ENCODE measurements at regions of chr3 and their contacts with region 1.

Region 1: GRCh38 chr3:122942937-122943827 is 84.4 kb downstream of the SEMA5B start:
- DNase-seq: peak; percentile 74 to 89 (median 89)
- ATAC-seq: peak; percentile 85 to 87
- H3K4me3 ChIP-seq: no peak overlapping the region
- H3K27ac ChIP-seq: no peak overlapping the region
- H3K4me1 ChIP-seq: no peaks in the 10 kb centered on the region
- H3K27me3 ChIP-seq: no peaks in the 10 kb centered on the region

Region 2: DNA sequence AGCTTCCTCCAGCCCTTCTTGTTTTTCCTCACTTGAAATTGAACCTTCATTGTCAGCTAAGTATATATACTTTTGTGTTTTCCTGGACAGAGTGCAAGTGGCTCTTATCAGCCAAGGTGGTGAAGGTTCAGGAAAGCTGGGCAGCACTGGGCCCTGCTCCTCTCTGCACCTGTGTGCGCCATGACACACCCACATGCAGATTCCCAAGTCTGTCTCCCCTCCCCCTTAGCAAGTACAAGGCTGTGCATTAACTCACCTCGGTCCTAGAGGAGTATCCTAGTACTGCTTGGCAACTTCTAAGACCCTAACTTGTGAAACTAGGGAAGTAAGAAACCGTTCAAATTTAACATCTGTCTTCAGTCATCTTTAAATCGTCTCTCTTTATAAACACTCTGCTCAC is 62.6 kb before region 1 on chr3:
- intact Hi-C with region 1: no loop called
- DNase-seq: no peak
- ATAC-seq: peak in 1 of 2 donors; percentile 13
- H3K4me3 ChIP-seq: no peak overlapping the region
- H3K27ac ChIP-seq: no peak overlapping the region
- H3K4me1 ChIP-seq: no peaks in the 10 kb centered on the region
- H3K27me3 ChIP-seq: no peaks in the 10 kb centered on the region

Region 3: GRCh38 chr3:122982216-122983185 is 39.3 kb after region 1 on chr3:
- intact Hi-C with region 1: loop called in 2 of 4 experiments (anchors 5 kb)
- DNase-seq: peak; percentile 39 to 85 (median 76)
- ATAC-seq: peak; percentile 20 to 22
- H3K4me3 ChIP-seq: no peak overlapping the region
- H3K27ac ChIP-seq: no peak overlapping the region
- H3K4me1 ChIP-seq: peaks cover 2% of the 10 kb centered on the region
- H3K27me3 ChIP-seq: no peaks in the 10 kb centered on the region

Region 4: DNA sequence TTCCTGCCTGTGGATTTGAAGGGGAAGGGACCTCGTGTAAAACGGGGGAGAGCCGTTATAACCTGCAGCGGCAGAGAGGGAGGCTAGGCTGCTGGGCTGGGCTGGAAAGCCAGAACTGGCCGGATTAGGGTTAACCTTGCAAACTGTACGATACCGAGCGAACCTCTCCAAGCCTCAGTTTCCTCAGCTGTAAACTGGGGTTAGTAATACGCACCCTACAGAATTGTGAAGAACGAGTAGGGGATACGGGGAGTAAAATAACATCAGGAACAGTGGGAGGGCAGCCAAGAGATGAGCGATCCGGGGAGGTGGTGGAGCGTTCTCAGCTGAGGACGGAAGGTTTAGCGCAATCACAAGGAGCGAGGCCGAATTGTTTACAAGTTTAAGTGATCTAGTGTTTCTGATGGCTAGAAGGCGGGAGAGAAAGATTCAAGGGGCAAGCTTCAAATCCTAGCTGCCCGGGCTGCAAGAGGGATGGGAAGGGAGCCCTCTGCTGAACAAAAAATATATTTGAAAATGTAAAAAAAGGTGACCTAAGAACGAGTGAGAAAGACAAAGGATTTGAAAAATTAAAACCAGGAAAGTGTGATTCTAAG is 85.1 kb after region 1 on chr3:
- intact Hi-C with region 1: loop called (anchors 2 to 5 kb)
- DNase-seq: peak in 2 of 3 donors; percentile 27 to 52
- ATAC-seq: peak; percentile 44 to 63
- H3K4me3 ChIP-seq: peak overlapping the region; percentile 74
- H3K27ac ChIP-seq: no peak overlapping the region
- H3K4me1 ChIP-seq: peaks cover 2% of the 10 kb centered on the region
- H3K27me3 ChIP-seq: no peaks in the 10 kb centered on the region

Region 5: GRCh38 chr3:123258811-123259420 is 315.7 kb after region 1 on chr3:
- intact Hi-C with region 1: loop called in 3 of 4 experiments (anchors 5 to 10 kb)
- DNase-seq: no peak
- ATAC-seq: peak; percentile 63 to 75
- H3K4me3 ChIP-seq: no peak overlapping the region
- H3K27ac ChIP-seq: no peak overlapping the region
- H3K4me1 ChIP-seq: no peaks in the 10 kb centered on the region
- H3K27me3 ChIP-seq: no peaks in the 10 kb centered on the region

Region 6: DNA sequence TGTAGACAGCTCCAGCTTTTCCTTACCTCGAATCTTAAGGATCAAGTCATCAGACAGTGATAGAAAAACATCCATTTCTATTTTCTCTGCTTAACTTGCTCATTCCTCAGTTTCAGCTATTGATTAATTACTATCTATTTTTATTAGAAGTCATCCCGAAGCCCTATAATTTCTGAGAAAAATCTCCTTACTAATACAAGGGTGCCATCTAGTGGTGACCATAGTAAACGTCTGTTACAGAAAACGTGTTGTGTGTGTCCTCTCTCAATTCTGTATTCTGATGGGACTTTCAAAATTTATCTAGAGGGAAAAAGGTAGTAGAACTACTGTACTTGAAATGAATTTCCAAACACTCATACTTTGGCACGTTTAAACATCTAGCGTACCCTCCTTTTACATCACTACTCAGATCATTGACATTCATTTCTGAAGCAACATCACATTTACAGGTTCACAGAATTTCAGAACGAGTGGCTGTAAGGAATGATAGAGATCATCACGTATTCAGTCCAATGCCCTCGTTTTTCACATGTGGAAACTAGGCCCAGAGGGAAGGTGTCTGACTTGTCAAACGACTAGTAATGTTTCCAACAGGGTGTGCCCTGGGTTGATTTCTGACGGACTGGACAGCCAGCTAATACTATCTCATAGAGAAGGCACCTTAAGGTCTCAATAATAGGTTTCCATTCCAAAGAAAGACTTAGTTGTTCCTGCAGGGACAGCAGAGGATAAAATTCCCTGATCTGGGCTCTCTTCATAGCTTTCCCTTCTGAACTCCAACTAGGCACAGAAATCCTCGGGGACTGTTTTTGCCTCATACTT is 616.1 kb after region 1 on chr3:
- intact Hi-C with region 1: loop called in 1 of 4 experiments (anchors 10 kb)
- DNase-seq: no peak
- ATAC-seq: peak in 1 of 2 donors; percentile 34
- H3K4me3 ChIP-seq: no peak overlapping the region
- H3K27ac ChIP-seq: no peak overlapping the region
- H3K4me1 ChIP-seq: no peaks in the 10 kb centered on the region
- H3K27me3 ChIP-seq: no peaks in the 10 kb centered on the region

Measured in right cardiac atrium (tissue), 5 donors.